GM12878 (cell line): ENCODE measurements at regions of chr12 and their contacts with region 1.

Region 1: GRCh38 chr12:130747867-130748740 is 32.0 kb upstream of the RIMBP2 start:
- DNase-seq: no peak
- ATAC-seq: peak; percentile 100
- H3K4me3 ChIP-seq: no peak overlapping the region
- H3K27ac ChIP-seq: no peak overlapping the region
- H3K4me1 ChIP-seq: no peaks in the 10 kb centered on the region; the same call in 1 of the 2 replicates
- H3K27me3 ChIP-seq: no peaks in the 10 kb centered on the region
- CTCF ChIP-seq: peak; percentile 76 to 93 (median 86)
- EP300 ChIP-seq: no peak
- POLR2A ChIP-seq: no peak
- RAD21 ChIP-seq: peak; percentile 79

Region 2: DNA sequence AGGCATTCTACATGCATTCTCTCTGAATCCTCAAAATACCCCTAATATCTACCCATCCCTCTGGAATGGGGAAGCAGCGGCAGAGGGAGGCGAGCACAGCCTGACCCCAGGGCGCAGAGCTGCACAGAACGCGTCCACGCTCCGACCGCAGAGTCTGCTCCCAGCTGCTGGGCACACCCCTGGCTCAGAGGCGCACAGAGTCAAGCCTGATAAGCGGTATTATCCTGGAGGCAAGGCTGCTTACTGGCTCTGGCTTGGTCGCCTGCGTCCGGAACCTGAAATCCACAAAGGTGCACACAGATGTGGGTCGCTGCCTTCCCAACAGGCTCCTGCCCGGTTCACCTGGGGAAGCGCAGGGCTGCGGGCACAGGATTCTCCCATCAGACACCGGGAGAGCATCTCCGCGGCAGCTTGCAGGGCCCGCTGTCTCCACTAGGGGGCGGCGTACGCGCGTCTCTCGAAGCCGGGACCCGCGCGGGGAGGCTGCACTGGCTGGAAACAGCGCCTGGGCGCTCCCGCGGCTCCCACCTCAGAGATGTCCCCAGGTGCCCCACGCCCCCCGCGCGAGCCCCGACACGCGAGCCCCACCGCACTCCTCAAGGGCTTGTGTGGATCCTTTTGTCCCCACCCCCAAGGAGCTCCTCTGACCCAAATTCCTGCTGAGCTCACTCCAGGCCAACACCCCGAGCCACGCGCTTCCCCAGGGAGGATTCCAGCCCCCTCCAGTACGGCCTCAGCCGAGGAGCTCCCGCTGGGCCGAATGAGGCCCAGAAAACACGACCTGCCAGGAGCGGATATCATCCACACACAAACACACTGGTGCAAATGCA is 705.9 kb before region 1 on chr12:
- CTCF ChIA-PET with region 1: interaction called, 14 read pairs
- POLR2A ChIA-PET with region 1: no interaction called
- RAD21 ChIA-PET with region 1: interaction called, 3 read pairs
- SMC1A ChIA-PET with region 1: no interaction called
- in situ Hi-C with region 1: loop called (anchors 5 kb)
- intact Hi-C with region 1: loop called (anchors 5 kb)
- DNase-seq: no peak
- ATAC-seq: no peak
- H3K4me3 ChIP-seq: no peak overlapping the region
- H3K27ac ChIP-seq: no peak overlapping the region
- H3K4me1 ChIP-seq: no peaks in the 10 kb centered on the region
- H3K27me3 ChIP-seq: no peaks in the 10 kb centered on the region
- CTCF ChIP-seq: peak; percentile 22 to 46 (median 26); a peak in 5 of 6 replicates
- EP300 ChIP-seq: no peak
- POLR2A ChIP-seq: no peak
- RAD21 ChIP-seq: no peak

Region 3: GRCh38 chr12:130049666-130050065 is 698.4 kb before region 1 on chr12:
- CTCF ChIA-PET with region 1: interaction called, 14 read pairs
- POLR2A ChIA-PET with region 1: no interaction called
- RAD21 ChIA-PET with region 1: interaction called, 3 read pairs
- SMC1A ChIA-PET with region 1: interaction called, 3 read pairs
- in situ Hi-C with region 1: loop called (anchors 5 kb)
- intact Hi-C with region 1: loop called (anchors 5 kb)
- DNase-seq: no peak
- ATAC-seq: no peak
- H3K4me3 ChIP-seq: no peak overlapping the region
- H3K27ac ChIP-seq: no peak overlapping the region
- H3K4me1 ChIP-seq: no peaks in the 10 kb centered on the region; the same call in 1 of the 2 replicates
- H3K27me3 ChIP-seq: no peaks in the 10 kb centered on the region
- CTCF ChIP-seq: no peak; a peak in 1 of 6 replicates
- EP300 ChIP-seq: no peak
- POLR2A ChIP-seq: no peak
- RAD21 ChIP-seq: no peak

Region 4: DNA sequence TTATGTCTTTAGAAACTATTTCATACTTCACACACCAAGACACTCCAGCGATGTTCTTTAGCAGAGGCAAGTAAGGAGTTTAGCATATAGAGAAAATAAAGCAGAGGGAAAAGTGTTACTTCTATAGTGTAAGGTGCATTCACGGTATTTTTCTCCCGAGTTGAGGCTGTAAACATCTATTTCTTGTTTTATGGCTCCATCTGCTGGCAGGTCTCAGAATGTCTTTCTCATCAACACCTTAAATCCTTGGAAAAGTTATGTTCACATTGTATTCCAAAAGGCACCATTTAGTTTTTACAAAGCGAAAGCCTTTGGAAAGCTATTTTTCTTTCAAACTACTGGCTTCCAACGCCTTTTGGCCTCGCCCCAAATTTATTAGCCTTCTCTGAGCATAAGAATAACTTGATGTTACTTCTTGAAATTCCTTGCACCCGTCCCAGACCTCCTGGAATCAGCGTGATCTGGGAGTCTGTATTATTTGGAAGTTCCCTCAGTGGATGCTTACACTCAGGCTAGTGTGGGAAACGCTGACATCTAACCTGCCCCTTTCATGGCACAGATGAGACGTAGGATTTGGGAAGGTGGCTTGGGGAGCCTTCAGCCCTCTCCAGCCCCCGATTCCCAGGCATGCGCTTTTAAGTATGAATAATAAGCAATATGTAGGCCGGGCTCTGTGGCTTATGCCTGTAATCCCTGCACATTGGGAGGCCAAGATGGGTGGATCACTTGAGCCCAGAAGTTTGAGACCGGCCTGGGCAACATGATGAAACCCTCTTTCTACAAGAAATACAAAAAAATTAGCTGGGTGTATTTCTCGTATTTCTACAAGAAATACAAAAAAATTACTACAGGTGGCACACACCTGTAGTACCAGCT is 412.3 kb before region 1 on chr12:
- CTCF ChIA-PET with region 1: interaction called, 3 read pairs
- POLR2A ChIA-PET with region 1: no interaction called
- RAD21 ChIA-PET with region 1: no interaction called
- SMC1A ChIA-PET with region 1: interaction called, 3 read pairs
- in situ Hi-C with region 1: no loop called
- intact Hi-C with region 1: loop called (anchors 1 kb)
- DNase-seq: peak; percentile 3
- ATAC-seq: peak; percentile 56; the same call in 1 of the 3 replicates
- H3K4me3 ChIP-seq: no peak overlapping the region
- H3K27ac ChIP-seq: no peak overlapping the region
- H3K4me1 ChIP-seq: no peaks in the 10 kb centered on the region
- H3K27me3 ChIP-seq: no peaks in the 10 kb centered on the region
- CTCF ChIP-seq: peak; percentile 37 to 71 (median 58); a peak in 5 of 6 replicates
- EP300 ChIP-seq: no peak
- POLR2A ChIP-seq: no peak
- RAD21 ChIP-seq: peak; percentile 73

Region 5: DNA sequence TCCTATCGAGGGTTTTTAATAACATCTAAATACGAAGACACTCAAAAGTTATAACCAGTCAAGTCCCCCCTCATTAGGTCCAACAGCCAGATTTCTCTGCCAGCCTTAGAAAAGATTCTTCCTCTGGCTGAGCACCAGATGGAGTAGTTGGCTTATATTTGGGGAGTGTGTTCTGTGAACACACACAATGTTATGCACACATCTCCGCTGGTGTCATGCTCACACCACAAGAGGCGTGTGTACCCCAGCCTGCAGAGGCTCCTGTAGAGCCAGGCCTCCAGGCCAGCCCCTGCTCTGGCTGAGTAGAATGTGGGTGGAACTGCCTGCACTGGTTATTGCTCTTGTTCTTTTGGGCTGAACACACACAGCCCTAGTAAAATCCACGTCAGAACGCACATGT is 346.4 kb before region 1 on chr12:
- CTCF ChIA-PET with region 1: no interaction called
- POLR2A ChIA-PET with region 1: no interaction called
- RAD21 ChIA-PET with region 1: no interaction called
- SMC1A ChIA-PET with region 1: interaction called, 4 read pairs
- in situ Hi-C with region 1: no loop called
- intact Hi-C with region 1: loop called (anchors 5 kb)
- DNase-seq: no peak
- ATAC-seq: no peak
- H3K4me3 ChIP-seq: no peak overlapping the region
- H3K27ac ChIP-seq: no peak overlapping the region
- H3K4me1 ChIP-seq: no peaks in the 10 kb centered on the region
- H3K27me3 ChIP-seq: no peaks in the 10 kb centered on the region
- CTCF ChIP-seq: peak in 2 of 3 experiments; percentile 5 to 22; a peak in 2 of 6 replicates
- EP300 ChIP-seq: no peak
- POLR2A ChIP-seq: no peak
- RAD21 ChIP-seq: peak; percentile 34

Region 6: DNA sequence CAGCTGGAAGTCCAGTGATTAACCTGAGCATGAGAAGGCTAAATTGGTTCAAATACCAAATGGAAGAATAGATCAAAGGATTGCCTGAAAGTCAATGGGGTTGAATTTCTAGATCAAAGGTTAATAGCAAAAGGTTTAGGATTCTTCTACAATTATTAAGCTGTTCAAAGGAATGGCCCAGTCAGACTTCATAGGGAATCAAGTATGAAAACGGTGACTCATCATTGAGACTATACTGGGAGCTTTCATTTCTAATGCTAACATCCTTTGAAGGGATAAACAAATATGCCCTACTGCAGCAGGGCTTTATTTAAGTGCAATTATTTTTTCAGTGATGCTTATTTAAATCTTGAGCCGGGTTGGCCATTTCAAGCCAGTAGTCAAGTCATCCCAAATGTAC is 184.8 kb before region 1 on chr12:
- CTCF ChIA-PET with region 1: no interaction called
- POLR2A ChIA-PET with region 1: no interaction called
- RAD21 ChIA-PET with region 1: no interaction called
- SMC1A ChIA-PET with region 1: no interaction called
- in situ Hi-C with region 1: no loop called
- intact Hi-C with region 1: no loop called
- DNase-seq: no peak
- ATAC-seq: no peak
- H3K4me3 ChIP-seq: no peak overlapping the region
- H3K27ac ChIP-seq: no peak overlapping the region
- H3K4me1 ChIP-seq: no peaks in the 10 kb centered on the region
- H3K27me3 ChIP-seq: no peaks in the 10 kb centered on the region
- CTCF ChIP-seq: no peak
- EP300 ChIP-seq: no peak
- POLR2A ChIP-seq: no peak
- RAD21 ChIP-seq: no peak

Region 7: GRCh38 chr12:130576371-130576816 is 171.7 kb before region 1 on chr12:
- CTCF ChIA-PET with region 1: interaction called, 3 read pairs
- POLR2A ChIA-PET with region 1: no interaction called
- RAD21 ChIA-PET with region 1: no interaction called
- SMC1A ChIA-PET with region 1: interaction called, 3 read pairs
- in situ Hi-C with region 1: no loop called
- intact Hi-C with region 1: loop called (anchors 10 kb)
- DNase-seq: no peak
- ATAC-seq: no peak
- H3K4me3 ChIP-seq: no peak overlapping the region
- H3K27ac ChIP-seq: peak overlapping the region; percentile 31; the same call in 1 of the 2 replicates
- H3K4me1 ChIP-seq: peaks cover 4% of the 10 kb centered on the region; the same call in 1 of the 2 replicates
- H3K27me3 ChIP-seq: no peaks in the 10 kb centered on the region
- CTCF ChIP-seq: no peak
- EP300 ChIP-seq: no peak
- POLR2A ChIP-seq: no peak
- RAD21 ChIP-seq: no peak

Region 8: DNA sequence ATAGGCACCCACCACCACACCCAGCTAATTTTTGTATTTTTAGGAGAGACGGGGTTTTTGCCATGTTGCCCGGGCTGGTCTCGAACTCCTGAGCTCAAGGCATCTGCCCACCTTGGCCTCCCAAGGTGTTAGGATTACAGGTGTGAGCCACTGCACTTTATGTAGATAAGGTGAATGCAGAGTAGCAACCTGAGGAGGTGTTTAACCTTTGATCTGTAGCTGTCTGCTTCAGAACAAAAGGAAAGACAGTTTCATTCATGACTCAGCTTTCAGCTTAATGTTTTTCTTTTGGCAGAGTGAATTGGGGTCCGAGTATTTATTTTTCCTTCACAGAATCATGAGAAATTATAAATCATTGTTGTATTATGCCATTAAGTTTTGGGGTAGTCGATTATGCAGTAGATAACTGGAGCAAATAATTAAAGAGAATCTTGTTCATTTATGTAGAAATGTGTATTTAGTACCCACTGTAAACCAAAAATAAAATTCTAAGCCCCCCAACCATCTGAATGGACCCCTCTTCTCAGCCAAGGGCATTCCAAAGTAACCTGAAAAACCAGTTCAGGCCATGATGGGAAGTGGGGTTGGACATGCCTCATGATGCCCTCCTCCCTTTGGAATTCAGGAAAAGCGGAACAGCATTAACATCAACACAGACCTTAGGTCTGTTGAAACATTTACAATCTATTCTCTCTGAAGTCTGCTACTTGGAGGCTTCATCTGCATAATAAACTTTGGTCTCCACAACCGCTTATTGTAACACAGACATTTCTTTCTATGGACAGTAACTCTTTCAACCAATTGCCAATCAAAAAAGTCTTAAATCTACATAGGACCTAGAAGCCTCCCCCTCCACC is 101.7 kb after region 1 on chr12:
- CTCF ChIA-PET with region 1: no interaction called
- POLR2A ChIA-PET with region 1: no interaction called
- RAD21 ChIA-PET with region 1: no interaction called
- SMC1A ChIA-PET with region 1: no interaction called
- in situ Hi-C with region 1: no loop called
- intact Hi-C with region 1: no loop called
- DNase-seq: no peak
- ATAC-seq: no peak
- H3K4me3 ChIP-seq: no peak overlapping the region
- H3K27ac ChIP-seq: no peak overlapping the region
- H3K4me1 ChIP-seq: no peaks in the 10 kb centered on the region
- H3K27me3 ChIP-seq: no peaks in the 10 kb centered on the region; a peak in 1 of 4 replicates
- CTCF ChIP-seq: no peak
- EP300 ChIP-seq: no peak
- POLR2A ChIP-seq: no peak
- RAD21 ChIP-seq: no peak